ENCODE measurements at regions of chr1 and their contacts with region 1.

Region 1: DNA sequence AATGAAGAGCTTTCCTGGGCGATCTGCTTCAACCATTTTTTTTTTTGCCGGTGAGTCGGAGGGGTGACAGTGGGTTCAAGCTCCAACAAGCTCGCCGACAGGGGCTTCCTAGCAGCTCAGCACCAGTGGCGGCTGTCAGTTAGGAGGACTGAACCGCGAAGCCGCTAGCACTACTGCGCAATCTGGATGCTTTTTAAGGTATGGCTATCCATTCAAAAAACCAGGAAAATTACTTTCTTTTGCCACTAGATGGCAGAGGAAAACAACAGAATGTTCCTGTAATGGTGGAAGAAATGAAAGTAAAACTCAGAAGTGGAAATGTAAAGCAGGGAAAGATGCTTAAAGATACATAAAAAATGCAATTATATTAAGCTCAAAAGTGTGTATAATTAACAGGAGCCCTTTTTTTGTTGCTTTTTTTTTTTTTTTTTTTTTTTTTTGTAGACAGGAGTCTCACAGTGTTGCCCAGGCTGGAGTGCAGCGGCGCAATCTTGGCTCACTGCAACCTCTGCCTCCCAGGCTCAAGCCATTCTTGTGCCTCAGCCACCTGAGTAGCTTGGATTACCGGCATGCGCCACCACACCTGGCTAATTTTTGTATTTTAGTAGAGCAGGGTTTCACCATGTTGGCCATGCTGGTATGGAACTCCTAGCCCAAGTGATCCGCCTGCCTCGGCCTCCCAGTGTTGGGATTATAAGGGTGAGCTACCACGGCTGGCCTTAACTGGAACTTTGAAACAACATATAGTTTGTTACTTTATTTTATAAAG is 8.5 kb downstream of the KYAT3 start:
- DNase-seq: peak in 7 of 9 donors; percentile 52 to 72 (median 62)
- ATAC-seq: peak; percentile 85
- H3K4me3 ChIP-seq: no peak overlapping the region
- H3K4me3 Mint-ChIP-seq: peak overlapping the region in 9 of 10 donors; percentile 56 to 76 (median 63)
- H3K27ac ChIP-seq: peak overlapping the region; percentile 55
- H3K27ac Mint-ChIP-seq: peak overlapping the region; percentile 46 to 94 (median 81)
- H3K4me1 ChIP-seq: peaks cover 5 to 13% of the 10 kb centered on the region in 2 donors
- H3K4me1 Mint-ChIP-seq: peaks cover 29 to 82% (median 70%) of the 10 kb centered on the region in 7 donors
- H3K27me3 ChIP-seq: no peaks in the 10 kb centered on the region
- H3K27me3 Mint-ChIP-seq: no peaks in the 10 kb centered on the region

Region 2: DNA sequence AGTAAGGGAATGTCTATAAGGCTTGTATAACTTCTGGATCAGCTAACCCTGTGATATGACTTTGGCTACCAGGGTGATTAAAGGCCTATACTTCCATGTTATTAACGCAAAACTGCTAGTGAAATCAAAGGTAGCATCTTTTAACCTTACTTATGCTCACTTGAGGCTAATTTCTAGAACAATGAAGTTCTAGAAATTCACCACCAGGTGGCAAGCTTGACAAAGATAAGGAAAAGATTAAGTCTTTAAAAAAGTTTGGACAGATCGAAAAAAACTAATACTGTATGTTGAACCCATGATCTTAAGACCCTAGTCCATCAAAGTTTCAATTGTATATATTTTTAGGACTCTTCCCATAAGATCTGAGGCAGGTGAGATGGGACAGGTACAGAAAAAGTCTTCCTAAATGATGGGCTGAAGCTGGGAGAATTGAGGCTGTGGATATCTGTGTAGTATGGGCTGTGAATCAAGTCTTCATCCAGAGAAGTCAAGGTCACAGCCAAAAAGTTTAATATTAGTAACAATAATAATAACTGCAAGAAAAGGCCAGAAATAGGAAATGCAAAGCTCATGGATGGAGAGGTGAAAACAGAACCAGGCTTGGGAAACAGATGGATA is 10.3 kb before region 1 on chr1:
- CTCF ChIA-PET with region 1: interaction called, 4 read pairs
- POLR2A ChIA-PET with region 1: interaction called, 4 read pairs
- intact Hi-C with region 1: loop called in 1 of 2 experiments (anchors 1 kb)
- DNase-seq: peak in 3 of 9 donors; percentile 11 to 34 (median 18)
- ATAC-seq: peak; percentile 47
- H3K4me3 ChIP-seq: no peak overlapping the region
- H3K4me3 Mint-ChIP-seq: no peak overlapping the region
- H3K27ac ChIP-seq: no peak overlapping the region
- H3K27ac Mint-ChIP-seq: peak overlapping the region in 1 of 9 donors; percentile 33
- H3K4me1 ChIP-seq: peaks cover 0 to 5% of the 10 kb centered on the region in 2 donors
- H3K4me1 Mint-ChIP-seq: peaks cover 15 to 39% (median 24%) of the 10 kb centered on the region in 7 donors
- H3K27me3 ChIP-seq: no peaks in the 10 kb centered on the region
- H3K27me3 Mint-ChIP-seq: no peaks in the 10 kb centered on the region

Region 3: GRCh38 chr1:88998716-88999115 is 14.7 kb after region 1 on chr1:
- CTCF ChIA-PET with region 1: interaction called, 22 read pairs
- POLR2A ChIA-PET with region 1: interaction called, 11 read pairs
- intact Hi-C with region 1: loop called in 1 of 2 experiments (anchors 1 kb)
- DNase-seq: peak in 7 of 9 donors; percentile 59 to 81 (median 76)
- ATAC-seq: peak; percentile 90
- H3K4me3 ChIP-seq: no peak overlapping the region
- H3K4me3 Mint-ChIP-seq: no peak overlapping the region
- H3K27ac ChIP-seq: no peak overlapping the region
- H3K27ac Mint-ChIP-seq: peak overlapping the region in 1 of 9 donors; percentile 68
- H3K4me1 ChIP-seq: peaks cover 12 to 19% of the 10 kb centered on the region in 2 donors
- H3K4me1 Mint-ChIP-seq: peaks cover 17 to 49% (median 34%) of the 10 kb centered on the region in 7 donors
- H3K27me3 ChIP-seq: no peaks in the 10 kb centered on the region
- H3K27me3 Mint-ChIP-seq: peaks cover 0 to 2% (median 0%) of the 10 kb centered on the region in 5 donors